CD8-positive, alpha-beta T cell (primary cell): ENCODE measurements at regions of chr4 and their contacts with region 1.

Region 1: GRCh38 chr4:17576932-17577665 is at the start of gene LAP3:
- DNase-seq: peak; percentile 96 to 100 (median 99)
- ATAC-seq: peak; percentile 87
- H3K4me3 ChIP-seq: peak within 1 kb of the TSS; percentile 91 to 94
- H3K4me3 Mint-ChIP-seq: peak within 1 kb of the TSS; percentile 93
- H3K27ac ChIP-seq: peak within 1 kb of the TSS; percentile 95 to 96
- H3K27ac Mint-ChIP-seq: peak within 1 kb of the TSS; percentile 97
- H3K4me1 ChIP-seq: peaks cover 20% of the 10 kb centered on the region
- H3K4me1 Mint-ChIP-seq: peaks cover 24% of the 10 kb centered on the region
- H3K27me3 ChIP-seq: no peaks in the 10 kb centered on the region
- H3K27me3 Mint-ChIP-seq: no peaks in the 10 kb centered on the region
- CTCF ChIP-seq: no peak
- total RNA-seq, gene LAP3: 60.1 to 60.2 TPM

Region 2: GRCh38 chr4:15655229-15656037 is 1921.7 kb before region 1 on chr4 and contains the start of gene FBXL5:
- CTCF ChIA-PET with region 1: no interaction called
- POLR2A ChIA-PET with region 1: no interaction called
- intact Hi-C with region 1: loop called in 1 of 2 experiments (anchors 10 kb)
- DNase-seq: peak; percentile 66 to 95 (median 80)
- ATAC-seq: peak; percentile 79
- H3K4me3 ChIP-seq: peak within 1 kb of the TSS; percentile 67 to 85
- H3K4me3 Mint-ChIP-seq: peak within 1 kb of the TSS; percentile 98
- H3K27ac ChIP-seq: peak within 1 kb of the TSS; percentile 88 to 92
- H3K27ac Mint-ChIP-seq: peak within 1 kb of the TSS; percentile 97
- H3K4me1 ChIP-seq: peaks cover 51% of the 10 kb centered on the region
- H3K4me1 Mint-ChIP-seq: peaks cover 46% of the 10 kb centered on the region
- H3K27me3 ChIP-seq: no peaks in the 10 kb centered on the region
- H3K27me3 Mint-ChIP-seq: no peaks in the 10 kb centered on the region
- CTCF ChIP-seq: no peak
- total RNA-seq, gene FBXL5: 60.4 to 61.7 TPM

Region 3: DNA sequence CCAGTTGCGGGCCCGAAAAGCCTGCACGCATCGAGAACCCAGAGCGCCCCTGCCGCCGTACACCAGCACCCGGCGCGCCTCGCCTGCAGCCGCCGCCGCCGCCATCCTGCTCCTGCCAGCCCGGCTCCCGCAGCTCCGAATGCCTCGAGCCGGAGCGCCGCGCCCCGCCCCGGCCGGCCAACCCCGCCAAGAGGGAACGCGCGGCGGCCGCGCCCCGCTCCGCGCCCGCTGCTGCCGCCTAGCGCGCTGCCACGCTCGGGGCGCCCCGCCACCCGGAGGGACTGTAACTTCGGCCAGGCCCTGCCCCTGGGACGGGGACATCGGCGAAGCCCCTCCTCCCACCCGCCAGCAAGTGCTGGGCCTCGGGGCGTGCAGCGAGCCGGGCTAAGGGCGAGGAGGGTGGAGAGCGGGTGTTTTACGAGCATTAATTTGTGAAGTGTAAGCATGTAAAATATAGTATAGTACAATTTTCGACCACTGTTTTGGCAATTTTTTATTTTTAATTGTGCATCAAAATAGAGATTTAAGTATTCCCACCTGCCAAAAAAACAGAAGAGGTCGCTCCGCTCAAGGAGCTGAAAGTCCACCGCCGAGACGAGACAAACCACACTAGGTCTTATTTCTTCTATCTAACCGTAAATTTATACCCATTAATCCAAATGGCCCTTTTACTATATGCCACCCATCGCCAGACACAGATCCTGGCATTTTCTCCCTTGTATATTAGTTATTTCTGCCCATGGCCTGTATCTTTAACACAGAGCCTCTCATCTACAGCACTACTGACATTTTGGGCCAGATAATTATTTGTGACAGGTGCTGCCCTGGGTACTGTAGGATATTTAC is 64.9 kb before region 1 on chr4 and contains the start of gene QDPR:
- CTCF ChIA-PET with region 1: no interaction called
- POLR2A ChIA-PET with region 1: no interaction called
- intact Hi-C with region 1: loop called in 1 of 2 experiments (anchors 1 kb)
- DNase-seq: peak; percentile 38 to 86 (median 70)
- ATAC-seq: peak; percentile 91
- H3K4me3 ChIP-seq: peak within 1 kb of the TSS; percentile 63 to 80
- H3K4me3 Mint-ChIP-seq: peak within 1 kb of the TSS; percentile 99
- H3K27ac ChIP-seq: peak within 1 kb of the TSS; percentile 49 to 57
- H3K27ac Mint-ChIP-seq: peak within 1 kb of the TSS; percentile 93
- H3K4me1 ChIP-seq: peaks cover 18% of the 10 kb centered on the region
- H3K4me1 Mint-ChIP-seq: peaks cover 33% of the 10 kb centered on the region
- H3K27me3 ChIP-seq: no peaks in the 10 kb centered on the region
- H3K27me3 Mint-ChIP-seq: peaks cover 6% of the 10 kb centered on the region
- CTCF ChIP-seq: peak; percentile 30
- total RNA-seq, gene QDPR: 10.9 to 11.6 TPM

Region 4: GRCh38 chr4:17552427-17552826 is 24.7 kb before region 1 on chr4:
- CTCF ChIA-PET with region 1: interaction called, 15 read pairs
- POLR2A ChIA-PET with region 1: no interaction called
- intact Hi-C with region 1: loop called (anchors 1 to 2 kb)
- DNase-seq: no peak
- ATAC-seq: no peak
- H3K4me3 ChIP-seq: no peak overlapping the region
- H3K4me3 Mint-ChIP-seq: no peak overlapping the region
- H3K27ac ChIP-seq: no peak overlapping the region
- H3K27ac Mint-ChIP-seq: no peak overlapping the region
- H3K4me1 ChIP-seq: no peaks in the 10 kb centered on the region
- H3K4me1 Mint-ChIP-seq: peaks cover 3% of the 10 kb centered on the region
- H3K27me3 ChIP-seq: no peaks in the 10 kb centered on the region
- H3K27me3 Mint-ChIP-seq: peaks cover 5% of the 10 kb centered on the region
- CTCF ChIP-seq: no peak

Region 5: DNA sequence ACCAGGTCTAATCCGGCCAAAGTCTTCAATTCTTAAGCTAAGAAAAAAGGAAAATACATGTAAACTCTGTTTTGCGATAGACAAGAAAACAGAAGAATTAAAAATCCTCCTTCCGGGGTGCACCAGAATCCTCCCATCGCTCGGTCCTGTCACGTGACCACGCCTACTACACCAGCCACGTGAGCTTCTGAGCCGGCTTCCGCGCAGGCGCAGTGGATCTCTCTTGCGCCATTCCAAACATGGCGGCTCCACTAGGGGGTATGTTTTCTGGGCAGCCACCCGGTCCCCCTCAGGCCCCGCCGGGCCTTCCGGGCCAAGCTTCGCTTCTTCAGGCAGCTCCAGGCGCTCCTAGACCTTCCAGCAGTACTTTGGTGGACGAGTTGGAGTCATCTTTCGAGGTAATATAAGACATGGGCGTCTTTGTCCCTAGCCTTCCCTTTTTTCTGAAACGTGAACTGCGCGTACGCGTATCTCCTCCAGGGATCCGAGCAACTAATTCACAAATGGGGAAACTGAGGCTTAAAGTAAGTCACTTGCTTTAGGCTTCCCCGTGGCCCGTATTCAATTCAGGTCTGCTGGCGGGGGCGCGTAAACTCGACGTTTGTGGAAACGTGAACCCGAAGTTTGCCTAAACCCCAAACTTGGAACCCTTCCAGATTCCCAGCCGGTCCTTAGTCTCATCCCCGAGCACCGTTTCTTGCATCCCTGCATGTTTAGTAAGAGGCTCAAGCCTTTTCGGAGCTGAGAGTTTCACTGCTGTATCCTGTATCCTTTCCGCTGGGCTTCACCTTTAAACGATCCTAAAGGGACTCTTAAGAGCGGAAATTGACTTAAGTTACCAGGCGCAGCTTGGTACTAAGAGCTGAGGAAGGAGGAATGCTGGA is 37.6 kb after region 1 on chr4 and contains the start of gene MED28:
- CTCF ChIA-PET with region 1: no interaction called
- POLR2A ChIA-PET with region 1: interaction called, 15 read pairs
- intact Hi-C with region 1: loop called (anchors 1 kb)
- DNase-seq: peak; percentile 84 to 98 (median 95)
- ATAC-seq: peak; percentile 89
- H3K4me3 ChIP-seq: peak within 1 kb of the TSS; percentile 95 to 99
- H3K4me3 Mint-ChIP-seq: peak within 1 kb of the TSS; percentile 99
- H3K27ac ChIP-seq: peak within 1 kb of the TSS; percentile 87 to 92
- H3K27ac Mint-ChIP-seq: peak within 1 kb of the TSS; percentile 97
- H3K4me1 ChIP-seq: peaks cover 41% of the 10 kb centered on the region
- H3K4me1 Mint-ChIP-seq: peaks cover 41% of the 10 kb centered on the region
- H3K27me3 ChIP-seq: no peaks in the 10 kb centered on the region
- H3K27me3 Mint-ChIP-seq: no peaks in the 10 kb centered on the region
- CTCF ChIP-seq: no peak
- total RNA-seq, gene MED28: 60.0 to 64.8 TPM

Region 6: DNA sequence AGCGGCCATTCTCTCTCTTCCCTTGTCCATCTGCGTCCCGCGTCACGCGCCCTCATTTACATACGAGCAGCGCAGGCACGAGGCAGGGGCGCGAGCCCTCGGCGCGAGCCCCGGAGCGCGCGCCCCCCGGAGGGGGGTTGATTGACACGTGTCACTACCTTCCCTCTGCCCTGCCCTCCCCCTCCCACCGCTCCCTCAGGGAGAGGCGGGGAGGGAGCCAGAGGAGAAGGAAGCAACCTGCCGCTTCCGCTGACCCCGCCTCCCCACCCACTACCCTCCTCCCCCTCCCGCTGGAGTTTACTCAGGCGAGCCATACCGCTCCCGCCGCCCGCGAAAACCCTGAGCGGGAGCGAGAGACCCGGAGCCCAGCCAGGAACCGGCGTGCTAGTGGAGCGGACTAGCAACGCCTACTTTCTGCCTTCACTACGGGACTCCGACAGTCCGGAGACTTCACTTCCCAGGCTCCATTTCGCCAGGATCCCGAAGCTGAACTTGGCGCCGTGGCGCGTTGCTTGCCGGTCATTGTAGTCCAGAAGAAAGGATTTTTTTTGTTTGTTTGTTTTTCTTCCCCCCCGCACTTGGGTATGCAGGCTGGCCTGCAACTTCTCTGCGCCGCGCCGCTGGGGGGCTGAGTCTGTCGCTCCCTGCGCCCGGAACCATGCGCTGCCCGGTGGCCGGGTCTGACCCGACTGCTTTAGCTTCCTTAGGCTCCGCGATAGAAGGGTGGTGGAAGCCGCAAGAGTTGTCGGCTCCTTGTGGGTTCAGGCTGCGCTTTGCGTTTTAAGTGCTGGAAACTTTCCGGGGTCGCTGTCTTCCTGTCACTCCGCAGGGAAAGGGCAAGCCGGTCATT is 444.8 kb after region 1 on chr4 and contains the start of gene LCORL:
- CTCF ChIA-PET with region 1: no interaction called
- POLR2A ChIA-PET with region 1: interaction called, 5 read pairs
- intact Hi-C with region 1: loop called (anchors 1 to 2 kb)
- DNase-seq: peak; percentile 75 to 95 (median 86)
- ATAC-seq: peak; percentile 83
- H3K4me3 ChIP-seq: peak within 1 kb of the TSS; percentile 63 to 98
- H3K4me3 Mint-ChIP-seq: peak within 1 kb of the TSS; percentile 95
- H3K27ac ChIP-seq: peak within 1 kb of the TSS; percentile 63 to 80
- H3K27ac Mint-ChIP-seq: peak within 1 kb of the TSS; percentile 89
- H3K4me1 ChIP-seq: peaks cover 18% of the 10 kb centered on the region
- H3K4me1 Mint-ChIP-seq: peaks cover 27% of the 10 kb centered on the region
- H3K27me3 ChIP-seq: no peaks in the 10 kb centered on the region
- H3K27me3 Mint-ChIP-seq: peaks cover 2% of the 10 kb centered on the region
- CTCF ChIP-seq: no peak
- total RNA-seq, gene LCORL: 5.3 to 7.5 TPM